ENCODE measurements at regions of chr2 and their contacts with region 1.

Region 1: GRCh38 chr2:226799181-226799975 is at the start of gene IRS1:
- DNase-seq: peak; percentile 53
- H3K4me3 Mint-ChIP-seq: peak within 1 kb of the TSS; percentile 83
- H3K27ac Mint-ChIP-seq: peak within 1 kb of the TSS; percentile 44
- H3K4me1 Mint-ChIP-seq: peaks cover 22% of the 10 kb centered on the region
- H3K27me3 Mint-ChIP-seq: peaks cover 1% of the 10 kb centered on the region
- total RNA-seq, gene IRS1: 2.6 to 2.7 TPM

Region 2: GRCh38 chr2:225889446-225889850 is 909.9 kb before region 1 on chr2:
- CTCF ChIA-PET with region 1: interaction called, 14 read pairs
- intact Hi-C with region 1: loop called (anchors 1 kb)
- DNase-seq: no peak
- H3K4me3 Mint-ChIP-seq: no peak overlapping the region
- H3K27ac Mint-ChIP-seq: no peak overlapping the region
- H3K4me1 Mint-ChIP-seq: no peaks in the 10 kb centered on the region
- H3K27me3 Mint-ChIP-seq: peaks cover 14% of the 10 kb centered on the region

Region 3: GRCh38 chr2:226489775-226490541 is 309.4 kb before region 1 on chr2:
- CTCF ChIA-PET with region 1: interaction called, 3 read pairs
- intact Hi-C with region 1: loop called (anchors 5 kb)
- DNase-seq: peak; percentile 6
- H3K4me3 Mint-ChIP-seq: no peak overlapping the region
- H3K27ac Mint-ChIP-seq: no peak overlapping the region
- H3K4me1 Mint-ChIP-seq: peaks cover 5% of the 10 kb centered on the region
- H3K27me3 Mint-ChIP-seq: peaks cover 11% of the 10 kb centered on the region

Region 4: DNA sequence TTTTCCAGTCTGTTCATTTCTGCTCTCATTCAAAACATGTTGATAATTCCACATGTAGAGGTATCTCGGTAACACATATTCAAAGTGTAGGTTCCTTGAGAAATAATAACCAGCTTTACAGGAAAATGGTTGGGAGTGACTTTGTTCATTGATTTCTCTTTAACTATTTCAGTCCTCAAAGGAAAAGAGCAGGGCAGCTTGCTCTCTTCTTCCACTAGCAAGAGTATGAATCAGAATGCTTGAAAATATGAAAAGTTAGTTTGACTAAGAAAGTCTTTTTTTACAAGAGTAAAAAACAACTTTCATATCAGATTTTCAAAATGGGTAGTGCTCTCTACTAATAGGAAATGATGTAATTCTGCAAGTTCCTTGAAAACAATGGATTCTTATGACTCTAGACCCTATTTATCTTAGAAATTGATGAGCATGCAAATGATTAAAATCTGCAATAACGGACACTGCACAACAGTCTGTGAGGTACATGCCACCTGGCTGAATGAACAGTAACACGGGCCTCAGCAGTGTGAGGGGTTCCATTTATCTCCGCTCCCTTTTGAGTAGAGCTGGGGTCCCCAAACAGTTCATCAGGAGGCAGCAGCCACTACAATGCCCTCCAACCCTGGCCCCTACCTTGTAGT is 65.3 kb before region 1 on chr2:
- CTCF ChIA-PET with region 1: interaction called, 3 read pairs
- intact Hi-C with region 1: loop called (anchors 2 kb)
- DNase-seq: no peak
- H3K4me3 Mint-ChIP-seq: no peak overlapping the region
- H3K27ac Mint-ChIP-seq: peak overlapping the region; percentile 73
- H3K4me1 Mint-ChIP-seq: peaks cover 11% of the 10 kb centered on the region
- H3K27me3 Mint-ChIP-seq: no peaks in the 10 kb centered on the region

Region 5: GRCh38 chr2:227095346-227095745 is 296.0 kb after region 1 on chr2:
- CTCF ChIA-PET with region 1: no interaction called
- intact Hi-C with region 1: no loop called
- DNase-seq: no peak
- H3K4me3 Mint-ChIP-seq: no peak overlapping the region
- H3K27ac Mint-ChIP-seq: no peak overlapping the region
- H3K4me1 Mint-ChIP-seq: no peaks in the 10 kb centered on the region
- H3K27me3 Mint-ChIP-seq: peaks cover 2% of the 10 kb centered on the region

Region 6: GRCh38 chr2:227106845-227107759 is 307.7 kb after region 1 on chr2:
- CTCF ChIA-PET with region 1: no interaction called
- intact Hi-C with region 1: loop called (anchors 1 kb)
- DNase-seq: peak; percentile 73
- H3K4me3 Mint-ChIP-seq: no peak overlapping the region
- H3K27ac Mint-ChIP-seq: no peak overlapping the region
- H3K4me1 Mint-ChIP-seq: no peaks in the 10 kb centered on the region
- H3K27me3 Mint-ChIP-seq: no peaks in the 10 kb centered on the region

Measured in activated naive CD4-positive, alpha-beta T cell treated with anti-CD3 and anti-CD28 coated beads for 36 hours (primary cell).